ENCODE measurements at regions of chr1 and their contacts with region 1.

Region 1: GRCh38 chr1:73839922-73840321 is 358.1 kb downstream of the LRRIQ3 start:
- DNase-seq: peak; percentile 6
- H3K4me3 ChIP-seq: no peak overlapping the region
- H3K27ac ChIP-seq: no peak overlapping the region
- H3K4me1 ChIP-seq: no peaks in the 10 kb centered on the region
- H3K27me3 ChIP-seq: peaks cover 2% of the 10 kb centered on the region
- CTCF ChIP-seq: peak; percentile 55 to 69

Region 2: GRCh38 chr1:73998348-73998959 is 158.5 kb after region 1 on chr1:
- CTCF ChIA-PET with region 1: no interaction called
- dilution Hi-C with region 1: no loop called
- in situ Hi-C with region 1: loop called (anchors 5 to 25 kb)
- intact Hi-C with region 1: loop called (anchors 1 kb)
- DNase-seq: peak; percentile 28
- H3K4me3 ChIP-seq: no peak overlapping the region
- H3K27ac ChIP-seq: no peak overlapping the region
- H3K4me1 ChIP-seq: no peaks in the 10 kb centered on the region
- H3K27me3 ChIP-seq: no peaks in the 10 kb centered on the region
- CTCF ChIP-seq: peak; percentile 44 to 50

Region 3: DNA sequence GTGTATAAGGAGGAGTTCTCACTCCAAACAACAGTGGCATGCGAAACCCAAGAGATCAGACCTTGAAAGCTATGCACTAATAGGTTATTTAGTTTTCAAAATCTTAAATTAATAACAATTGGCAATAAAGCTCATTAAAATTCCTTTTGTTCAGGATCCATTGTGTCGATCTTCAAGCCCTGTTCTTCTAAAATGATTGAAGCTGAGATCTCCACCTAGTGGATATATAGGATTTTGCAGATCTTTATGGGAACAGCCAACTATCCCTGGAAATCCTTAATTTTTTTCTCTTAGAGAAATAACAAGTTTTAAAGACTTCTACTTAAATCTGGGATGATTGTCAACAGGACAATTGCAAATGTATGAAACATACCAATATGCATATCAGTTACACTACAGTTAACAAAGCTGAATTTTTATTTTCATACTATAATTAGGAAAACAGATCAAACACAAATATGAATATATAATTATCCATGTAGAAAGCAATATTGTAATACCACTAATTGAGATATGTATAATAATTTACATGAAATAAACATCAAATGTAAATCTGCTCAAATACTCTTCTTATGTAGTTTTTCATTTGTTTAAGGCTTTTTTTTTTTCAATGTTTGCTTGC is 629.2 kb after region 1 on chr1:
- CTCF ChIA-PET with region 1: no interaction called
- dilution Hi-C with region 1: no loop called
- in situ Hi-C with region 1: no loop called
- intact Hi-C with region 1: loop called (anchors 1 kb)
- DNase-seq: peak; percentile 24
- H3K4me3 ChIP-seq: no peak overlapping the region
- H3K27ac ChIP-seq: no peak overlapping the region
- H3K4me1 ChIP-seq: no peaks in the 10 kb centered on the region
- H3K27me3 ChIP-seq: no peaks in the 10 kb centered on the region
- CTCF ChIP-seq: peak; percentile 52 to 65

Region 4: DNA sequence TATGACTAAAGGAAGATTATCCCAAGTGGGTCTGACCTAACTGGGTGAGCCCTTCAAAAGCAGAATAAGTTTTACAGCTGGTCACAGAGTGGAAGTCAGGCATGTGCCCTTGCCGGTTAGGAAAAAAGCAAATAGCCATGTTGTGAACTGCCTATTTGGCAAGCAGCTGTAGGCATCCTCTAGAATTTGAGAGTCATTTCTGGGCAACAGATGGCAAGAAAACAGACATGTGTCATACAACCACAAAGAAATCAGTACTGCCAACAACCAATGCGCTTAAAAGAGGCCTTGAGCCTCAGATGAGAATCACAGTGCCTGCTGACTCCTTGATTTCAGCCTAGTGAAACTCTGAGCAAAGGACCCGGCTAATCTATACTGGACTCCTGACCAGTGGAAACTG is 645.7 kb after region 1 on chr1:
- CTCF ChIA-PET with region 1: no interaction called
- dilution Hi-C with region 1: no loop called
- in situ Hi-C with region 1: loop called in 1 of 2 experiments (anchors 25 kb)
- intact Hi-C with region 1: no loop called
- DNase-seq: no peak
- H3K4me3 ChIP-seq: no peak overlapping the region
- H3K27ac ChIP-seq: no peak overlapping the region
- H3K4me1 ChIP-seq: no peaks in the 10 kb centered on the region
- H3K27me3 ChIP-seq: no peaks in the 10 kb centered on the region
- CTCF ChIP-seq: no peak

Region 5: GRCh38 chr1:74689621-74690363 is 849.9 kb after region 1 on chr1:
- CTCF ChIA-PET with region 1: no interaction called
- dilution Hi-C with region 1: no loop called
- in situ Hi-C with region 1: loop called (anchors 25 kb)
- intact Hi-C with region 1: loop called (anchors 2 kb)
- DNase-seq: peak; percentile 46
- H3K4me3 ChIP-seq: no peak overlapping the region
- H3K27ac ChIP-seq: no peak overlapping the region
- H3K4me1 ChIP-seq: peaks cover 11% of the 10 kb centered on the region
- H3K27me3 ChIP-seq: no peaks in the 10 kb centered on the region
- CTCF ChIP-seq: peak; percentile 81 to 82

Measured in mammary epithelial cell (primary cell).